B cell (primary cell): ENCODE measurements at regions of chr2 and their contacts with region 1.

Region 1: GRCh38 chr2:24409700-24410556 is 49.6 kb upstream of the ITSN2 start:
- DNase-seq: peak; percentile 77
- ATAC-seq: peak; percentile 66
- H3K4me3 ChIP-seq: no peak overlapping the region
- H3K4me3 Mint-ChIP-seq: no peak overlapping the region
- H3K27ac ChIP-seq: no peak overlapping the region
- H3K27ac Mint-ChIP-seq: no peak overlapping the region
- H3K4me1 ChIP-seq: no peaks in the 10 kb centered on the region
- H3K4me1 Mint-ChIP-seq: no peaks in the 10 kb centered on the region
- H3K27me3 ChIP-seq: peaks cover 0 to 5% (median 3%) of the 10 kb centered on the region in 4 experiments
- H3K27me3 Mint-ChIP-seq: peaks cover 15% of the 10 kb centered on the region
- CTCF ChIP-seq: peak; percentile 95

Region 2: DNA sequence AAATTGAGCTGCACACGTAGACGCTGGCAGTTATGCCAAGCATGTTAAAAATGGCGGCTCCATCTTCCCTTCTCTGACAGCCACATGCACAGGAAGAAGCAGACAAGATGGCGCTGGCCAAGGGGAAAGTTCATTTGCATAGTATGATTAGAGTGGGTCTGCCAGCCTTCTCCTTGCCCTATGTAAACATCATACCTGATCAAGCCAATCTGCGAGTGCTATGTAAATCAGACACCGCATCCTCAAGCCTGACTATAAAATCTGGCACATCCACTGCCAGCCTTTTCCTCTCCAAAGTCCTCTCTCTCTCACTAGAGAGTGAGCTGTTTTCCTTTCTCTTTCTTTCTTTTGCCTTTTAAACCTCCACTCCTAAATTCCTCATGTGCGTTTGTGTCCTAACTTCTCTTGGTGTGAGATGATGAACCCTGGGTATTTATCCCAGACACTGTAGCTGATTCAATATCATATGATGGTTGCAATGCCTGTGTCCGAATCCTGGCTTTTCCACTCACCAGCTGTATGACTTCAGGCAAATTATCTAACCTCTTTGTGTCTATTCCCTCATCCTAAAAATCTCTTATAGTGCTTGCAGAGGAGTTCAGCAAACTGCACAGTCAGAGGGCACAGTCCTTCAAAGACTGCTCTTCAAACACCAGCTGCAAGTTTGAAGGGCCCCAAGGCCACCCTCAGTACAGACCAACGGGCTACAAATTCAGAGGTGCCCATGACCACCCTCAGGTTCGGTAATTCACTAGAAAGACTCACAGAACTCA is 10.3 kb before region 1 on chr2:
- CTCF ChIA-PET with region 1: interaction called, 17 read pairs
- POLR2A ChIA-PET with region 1: no interaction called
- intact Hi-C with region 1: no loop called
- DNase-seq: no peak
- ATAC-seq: no peak
- H3K4me3 ChIP-seq: no peak overlapping the region
- H3K4me3 Mint-ChIP-seq: no peak overlapping the region
- H3K27ac ChIP-seq: no peak overlapping the region
- H3K27ac Mint-ChIP-seq: no peak overlapping the region
- H3K4me1 ChIP-seq: no peaks in the 10 kb centered on the region
- H3K4me1 Mint-ChIP-seq: no peaks in the 10 kb centered on the region
- H3K27me3 ChIP-seq: peaks cover 0 to 10% (median 5%) of the 10 kb centered on the region in 4 experiments
- H3K27me3 Mint-ChIP-seq: peaks cover 26% of the 10 kb centered on the region
- CTCF ChIP-seq: no peak

Region 3: GRCh38 chr2:24691806-24692205 is 281.9 kb after region 1 on chr2:
- CTCF ChIA-PET with region 1: no interaction called
- POLR2A ChIA-PET with region 1: no interaction called
- intact Hi-C with region 1: no loop called
- DNase-seq: no peak
- ATAC-seq: no peak
- H3K4me3 ChIP-seq: no peak overlapping the region
- H3K4me3 Mint-ChIP-seq: no peak overlapping the region
- H3K27ac ChIP-seq: no peak overlapping the region
- H3K27ac Mint-ChIP-seq: no peak overlapping the region
- H3K4me1 ChIP-seq: no peaks in the 10 kb centered on the region
- H3K4me1 Mint-ChIP-seq: no peaks in the 10 kb centered on the region
- H3K27me3 ChIP-seq: no peaks in the 10 kb centered on the region
- H3K27me3 Mint-ChIP-seq: no peaks in the 10 kb centered on the region
- CTCF ChIP-seq: no peak

Region 4: GRCh38 chr2:24827321-24828237 is 417.7 kb after region 1 on chr2:
- CTCF ChIA-PET with region 1: interaction called, 267 read pairs
- POLR2A ChIA-PET with region 1: no interaction called
- intact Hi-C with region 1: no loop called
- DNase-seq: peak; percentile 82
- ATAC-seq: peak; percentile 89
- H3K4me3 ChIP-seq: no peak overlapping the region
- H3K4me3 Mint-ChIP-seq: no peak overlapping the region
- H3K27ac ChIP-seq: no peak overlapping the region
- H3K27ac Mint-ChIP-seq: no peak overlapping the region
- H3K4me1 ChIP-seq: peaks cover 0 to 4% of the 10 kb centered on the region in 2 donors
- H3K4me1 Mint-ChIP-seq: no peaks in the 10 kb centered on the region
- H3K27me3 ChIP-seq: no peaks in the 10 kb centered on the region
- H3K27me3 Mint-ChIP-seq: no peaks in the 10 kb centered on the region
- CTCF ChIP-seq: peak; percentile 89

Region 5: GRCh38 chr2:25131567-25132298 is 721.8 kb after region 1 on chr2:
- CTCF ChIA-PET with region 1: interaction called, 68 read pairs
- POLR2A ChIA-PET with region 1: no interaction called
- intact Hi-C with region 1: loop called (anchors 1 kb)
- DNase-seq: peak; percentile 42
- ATAC-seq: no peak
- H3K4me3 ChIP-seq: peak overlapping the region in 3 of 5 experiments; percentile 8 to 39 (median 23)
- H3K4me3 Mint-ChIP-seq: peak overlapping the region; percentile 81
- H3K27ac ChIP-seq: no peak overlapping the region
- H3K27ac Mint-ChIP-seq: no peak overlapping the region
- H3K4me1 ChIP-seq: peaks cover 11 to 18% of the 10 kb centered on the region in 2 donors
- H3K4me1 Mint-ChIP-seq: peaks cover 16% of the 10 kb centered on the region
- H3K27me3 ChIP-seq: peaks cover 0 to 41% (median 22%) of the 10 kb centered on the region in 4 experiments
- H3K27me3 Mint-ChIP-seq: peaks cover 53% of the 10 kb centered on the region
- CTCF ChIP-seq: no peak

Region 6: GRCh38 chr2:25567406-25567805 is 1157.5 kb after region 1 on chr2:
- CTCF ChIA-PET with region 1: no interaction called
- POLR2A ChIA-PET with region 1: no interaction called
- intact Hi-C with region 1: loop called (anchors 5 kb)
- DNase-seq: peak; percentile 71
- ATAC-seq: peak; percentile 69
- H3K4me3 ChIP-seq: no peak overlapping the region
- H3K4me3 Mint-ChIP-seq: no peak overlapping the region
- H3K27ac ChIP-seq: peak overlapping the region in 1 of 2 donors; percentile 2
- H3K27ac Mint-ChIP-seq: no peak overlapping the region
- H3K4me1 ChIP-seq: peaks cover 17 to 19% of the 10 kb centered on the region in 2 donors
- H3K4me1 Mint-ChIP-seq: peaks cover 28% of the 10 kb centered on the region
- H3K27me3 ChIP-seq: no peaks in the 10 kb centered on the region
- H3K27me3 Mint-ChIP-seq: no peaks in the 10 kb centered on the region
- CTCF ChIP-seq: peak; percentile 77